ENCODE measurements at regions of chrX and their contacts with region 1.

Region 1: DNA sequence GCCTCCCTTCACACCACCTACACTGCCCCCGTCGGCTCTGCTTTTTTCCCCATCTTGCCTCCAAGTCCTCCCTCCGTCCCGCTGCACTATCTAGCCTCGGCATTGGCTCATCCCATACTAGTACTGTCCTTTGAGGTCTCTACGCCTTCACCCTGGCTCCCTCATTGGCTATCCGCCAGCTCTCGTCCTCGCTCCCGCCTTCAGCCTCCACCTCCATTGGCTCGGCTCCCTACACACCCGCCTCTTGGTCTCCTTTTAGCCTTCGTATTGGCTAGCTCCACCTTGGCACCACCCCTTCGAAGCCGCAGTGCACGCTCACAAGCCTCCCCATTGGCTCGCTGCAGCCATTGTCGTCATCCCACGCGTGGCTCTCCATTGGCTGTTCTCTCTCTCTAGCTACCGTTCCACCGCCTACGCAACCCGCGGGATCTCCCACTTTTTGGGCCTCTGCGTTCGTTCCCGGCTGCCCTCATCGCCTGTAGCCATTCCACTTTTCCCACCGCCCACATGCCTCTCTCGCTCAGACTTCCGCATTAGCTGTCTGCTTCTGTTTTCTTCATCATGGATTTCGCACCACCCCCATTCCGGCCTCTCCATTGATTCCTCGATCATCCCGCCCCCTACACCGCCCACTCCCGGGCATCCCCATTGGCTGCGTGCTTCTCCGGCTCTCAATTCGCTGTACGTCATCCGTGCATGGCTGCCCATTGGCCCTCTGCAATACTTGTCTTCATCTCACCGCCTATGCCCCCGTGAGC is 404 bp upstream of the PPP1R3F start:
- DNase-seq: peak; percentile 90
- H3K4me3 Mint-ChIP-seq: peak overlapping the region; percentile 91
- H3K27ac Mint-ChIP-seq: peak overlapping the region; percentile 99
- H3K4me1 Mint-ChIP-seq: peaks cover 60% of the 10 kb centered on the region
- H3K27me3 Mint-ChIP-seq: no peaks in the 10 kb centered on the region

Region 2: DNA sequence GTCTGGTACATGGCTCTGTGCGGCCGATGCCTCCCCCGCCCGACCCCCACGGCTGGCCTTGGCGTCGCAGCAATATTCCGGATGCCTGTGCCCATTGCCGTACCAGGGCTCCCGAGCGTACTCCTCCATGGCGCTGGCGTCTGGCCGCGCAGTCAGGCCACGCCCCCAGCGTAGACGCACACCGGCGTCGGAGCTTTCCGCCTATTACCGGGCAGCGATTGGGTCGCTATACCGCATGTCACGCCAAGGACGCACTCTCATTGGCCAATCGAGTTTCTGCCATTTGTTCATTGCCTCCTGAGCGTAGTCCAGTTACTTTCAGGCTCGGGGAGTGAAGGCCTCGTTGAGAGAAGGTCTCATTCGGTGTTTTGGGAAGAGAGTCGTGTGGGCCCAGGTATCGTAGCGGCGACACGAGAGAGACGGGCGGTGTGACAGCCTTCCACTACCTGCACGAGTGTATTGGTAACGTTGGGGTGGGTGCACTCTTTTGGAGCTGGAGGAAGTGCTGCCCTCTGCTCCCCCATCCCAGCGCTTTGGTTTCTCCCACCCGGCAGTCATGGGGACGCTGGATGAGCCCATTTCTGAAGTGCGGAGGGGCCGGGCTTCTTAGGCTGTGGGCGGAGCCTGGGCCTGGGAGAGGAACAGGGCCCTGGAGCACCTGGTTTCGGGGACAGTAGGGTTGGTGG is 371.4 kb before region 1 on chrX and contains the starts of genes PQBP1 and TIMM17B:
- intact Hi-C with region 1: loop called (anchors 10 kb)
- DNase-seq: peak; percentile 84
- H3K4me3 Mint-ChIP-seq: peak within 1 kb of the TSS; percentile 97
- H3K27ac Mint-ChIP-seq: peak within 1 kb of the TSS; percentile 100
- H3K4me1 Mint-ChIP-seq: peaks cover 8% of the 10 kb centered on the region
- H3K27me3 Mint-ChIP-seq: no peaks in the 10 kb centered on the region
- total RNA-seq, gene PQBP1: 112 and 119 TPM in 2 replicates
- total RNA-seq, gene TIMM17B: 72.2 and 72.3 TPM in 2 replicates

Region 3: DNA sequence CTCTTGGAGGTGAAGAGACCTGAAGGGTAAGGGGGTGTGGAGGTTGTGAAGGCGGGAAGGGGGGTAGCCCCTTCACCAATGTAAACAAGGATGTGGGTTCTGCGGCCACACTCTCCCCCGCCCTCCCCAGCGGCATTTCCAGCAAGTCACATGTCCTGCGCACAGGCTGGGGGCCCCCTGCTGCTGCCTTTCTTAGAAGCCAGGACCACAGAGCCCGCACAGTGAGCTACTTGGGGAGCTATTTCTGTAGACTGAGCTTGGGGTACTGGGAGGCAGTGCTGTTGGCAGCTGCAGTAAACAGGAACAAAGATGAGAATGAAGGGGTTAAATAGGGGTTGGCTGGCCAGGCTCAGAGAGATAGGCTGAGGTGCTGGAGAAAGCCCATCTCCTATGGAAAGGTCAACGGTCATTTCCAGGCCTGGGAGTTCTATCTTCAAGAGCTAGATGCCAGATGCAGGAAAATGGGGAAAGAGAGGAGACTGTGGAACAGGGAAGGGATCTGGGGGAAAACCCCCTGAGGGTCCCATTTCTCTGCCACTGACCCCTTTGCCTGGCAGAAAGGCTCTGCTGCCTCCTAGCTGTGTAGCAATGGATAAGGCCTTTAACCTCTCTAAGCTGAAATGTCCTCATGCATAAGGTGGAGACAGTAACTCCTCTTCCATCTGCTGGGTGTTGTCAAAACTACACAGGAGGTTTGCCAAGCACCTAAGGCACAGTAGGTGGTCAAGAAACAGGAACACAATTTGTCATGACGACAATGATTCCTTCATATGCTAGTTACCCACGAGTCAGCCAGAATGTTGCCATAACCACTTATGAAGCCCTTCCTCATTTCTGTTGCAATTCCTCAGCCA is 331.9 kb before region 1 on chrX:
- intact Hi-C with region 1: loop called (anchors 5 kb)
- DNase-seq: peak; percentile 85
- H3K4me3 Mint-ChIP-seq: peak overlapping the region; percentile 87
- H3K27ac Mint-ChIP-seq: peak overlapping the region; percentile 97
- H3K4me1 Mint-ChIP-seq: peaks cover 80% of the 10 kb centered on the region
- H3K27me3 Mint-ChIP-seq: no peaks in the 10 kb centered on the region

Region 4: GRCh38 chrX:49100704-49101628 is 168.2 kb before region 1 on chrX:
- intact Hi-C with region 1: loop called (anchors 5 kb)
- DNase-seq: peak; percentile 86
- H3K4me3 Mint-ChIP-seq: peak overlapping the region; percentile 90
- H3K27ac Mint-ChIP-seq: peak overlapping the region; percentile 87
- H3K4me1 Mint-ChIP-seq: no peaks in the 10 kb centered on the region
- H3K27me3 Mint-ChIP-seq: no peaks in the 10 kb centered on the region

Region 5: DNA sequence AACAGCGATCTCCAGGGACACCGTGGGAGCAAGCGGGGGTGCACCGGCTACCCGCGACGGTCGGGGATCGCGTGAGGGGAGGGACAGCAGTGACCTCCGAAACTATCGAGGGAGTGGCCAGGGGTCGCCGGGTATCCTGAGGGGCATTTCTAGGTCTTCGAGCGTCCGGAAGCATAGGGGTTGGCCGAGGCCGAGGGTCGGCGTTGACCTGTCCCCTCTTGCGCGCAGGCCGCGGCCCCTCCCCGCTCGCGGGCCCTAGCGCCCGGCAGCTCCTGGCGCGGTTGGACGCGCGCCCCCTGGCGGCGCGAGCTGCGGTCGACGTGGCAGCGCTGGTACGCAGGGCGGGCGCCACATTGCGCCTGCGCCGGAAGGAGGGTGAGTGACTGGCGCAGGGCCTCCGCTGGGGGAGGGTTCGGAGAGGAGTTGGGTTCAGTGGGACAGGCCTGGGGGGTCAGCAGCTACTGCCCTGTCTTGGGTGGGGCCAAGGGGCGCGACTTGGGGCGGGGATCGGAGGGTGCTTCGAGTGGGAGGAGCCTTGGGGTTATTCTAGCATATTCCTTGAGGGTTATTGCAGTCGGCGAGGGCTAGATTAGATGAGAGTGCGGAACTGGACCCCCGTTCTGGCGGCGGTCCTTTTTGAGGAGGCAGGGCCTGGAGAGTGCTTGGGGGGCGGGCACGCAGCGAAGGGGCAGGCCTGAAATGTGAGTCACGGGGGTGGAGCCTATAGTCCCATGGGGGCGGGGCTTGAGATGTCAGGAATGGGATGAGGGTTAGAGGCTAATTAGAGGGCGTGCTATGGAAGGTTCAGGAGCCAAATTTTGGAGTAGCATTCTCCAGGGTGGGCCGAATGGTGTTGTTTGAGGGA is 105.4 kb before region 1 on chrX:
- intact Hi-C with region 1: loop called (anchors 1 kb)
- DNase-seq: peak; percentile 77
- H3K4me3 Mint-ChIP-seq: peak overlapping the region; percentile 69
- H3K27ac Mint-ChIP-seq: peak overlapping the region; percentile 72
- H3K4me1 Mint-ChIP-seq: peaks cover 23% of the 10 kb centered on the region
- H3K27me3 Mint-ChIP-seq: peaks cover 4% of the 10 kb centered on the region

Region 6: GRCh38 chrX:49191033-49191871 is 77.9 kb before region 1 on chrX:
- intact Hi-C with region 1: loop called (anchors 1 kb)
- DNase-seq: peak; percentile 82
- H3K4me3 Mint-ChIP-seq: peak overlapping the region; percentile 95
- H3K27ac Mint-ChIP-seq: peak overlapping the region; percentile 93
- H3K4me1 Mint-ChIP-seq: peaks cover 24% of the 10 kb centered on the region
- H3K27me3 Mint-ChIP-seq: no peaks in the 10 kb centered on the region

Region 7: GRCh38 chrX:49230469-49231232 is 38.5 kb before region 1 on chrX:
- intact Hi-C with region 1: loop called (anchors 1 kb)
- DNase-seq: peak; percentile 53
- H3K4me3 Mint-ChIP-seq: peak overlapping the region; percentile 60
- H3K27ac Mint-ChIP-seq: peak overlapping the region; percentile 79
- H3K4me1 Mint-ChIP-seq: peaks cover 17% of the 10 kb centered on the region
- H3K27me3 Mint-ChIP-seq: peaks cover 4% of the 10 kb centered on the region

Region 8: DNA sequence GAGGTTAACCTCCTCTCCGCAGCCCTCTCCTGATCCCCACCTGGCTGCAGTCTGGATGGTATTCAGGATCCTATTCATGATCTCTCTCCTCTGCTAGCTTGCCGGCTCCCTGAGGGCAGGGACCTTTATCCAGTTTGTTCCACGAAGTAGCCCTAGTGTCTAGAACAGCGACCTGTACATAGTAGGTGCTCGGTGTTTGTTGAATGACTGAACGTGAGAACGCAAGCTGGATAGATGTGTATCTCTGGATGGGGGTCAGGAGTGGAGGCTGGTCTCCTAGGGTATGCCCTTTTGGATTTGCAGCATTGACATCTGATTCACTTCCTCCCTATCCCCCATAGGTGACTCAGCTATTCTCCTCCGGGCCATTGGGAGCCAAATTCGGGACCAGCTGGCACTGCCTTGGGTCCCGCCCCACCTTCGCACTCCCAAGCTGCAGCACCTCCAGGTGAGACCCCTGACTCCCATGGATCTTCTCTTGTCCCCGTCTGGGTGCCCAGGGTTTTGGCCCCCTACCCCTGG is 26.6 kb before region 1 on chrX:
- intact Hi-C with region 1: no loop called
- DNase-seq: no peak
- H3K4me3 Mint-ChIP-seq: no peak overlapping the region
- H3K27ac Mint-ChIP-seq: no peak overlapping the region
- H3K4me1 Mint-ChIP-seq: no peaks in the 10 kb centered on the region
- H3K27me3 Mint-ChIP-seq: no peaks in the 10 kb centered on the region

Region 9: DNA sequence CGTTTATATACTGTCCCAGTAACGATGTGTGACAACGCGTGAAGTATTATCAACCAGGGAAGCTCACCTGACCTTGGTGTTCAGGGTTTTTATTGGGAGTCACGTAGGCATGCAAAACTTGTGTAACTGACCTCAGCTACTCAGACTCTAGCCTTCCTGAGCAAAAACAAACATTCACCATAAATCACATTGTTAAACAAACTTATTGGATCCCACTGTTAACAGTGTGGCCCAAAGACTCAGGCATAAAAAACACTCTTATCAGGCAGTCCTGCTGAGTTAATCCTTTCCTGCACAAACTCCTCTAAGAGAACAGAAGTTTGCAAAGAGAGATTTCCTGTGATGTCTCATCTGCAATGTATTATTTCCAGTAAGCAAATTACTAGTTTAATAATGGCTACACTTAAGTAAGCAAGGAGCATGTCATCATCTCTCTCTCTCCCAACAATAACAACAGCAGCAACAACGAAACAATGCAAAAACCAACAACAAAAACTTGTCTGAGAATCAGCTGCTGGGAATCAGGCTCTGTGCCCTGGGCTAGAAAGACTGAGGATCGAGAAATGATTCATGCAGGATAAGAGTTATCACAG is 341.6 kb after region 1 on chrX:
- intact Hi-C with region 1: no loop called
- DNase-seq: no peak
- H3K4me3 Mint-ChIP-seq: no peak overlapping the region
- H3K27ac Mint-ChIP-seq: no peak overlapping the region
- H3K4me1 Mint-ChIP-seq: no peaks in the 10 kb centered on the region
- H3K27me3 Mint-ChIP-seq: peaks cover 2% of the 10 kb centered on the region